ENCODE measurements at regions of chr1 and their contacts with region 1.

Region 1: GRCh38 chr1:224851210-224851847 is 78.1 kb upstream of the DNAH14 start:
- DNase-seq: no peak
- H3K4me3 ChIP-seq: no peak overlapping the region
- H3K27ac ChIP-seq: no peak overlapping the region
- H3K4me1 ChIP-seq: no peaks in the 10 kb centered on the region
- H3K27me3 ChIP-seq: peaks cover 0 to 8% (median 0%) of the 10 kb centered on the region in 7 donors
- CTCF ChIP-seq: peak in 9 of 11 experiments; percentile 26 to 70 (median 53)
- POLR2A ChIP-seq: no peak

Region 2: DNA sequence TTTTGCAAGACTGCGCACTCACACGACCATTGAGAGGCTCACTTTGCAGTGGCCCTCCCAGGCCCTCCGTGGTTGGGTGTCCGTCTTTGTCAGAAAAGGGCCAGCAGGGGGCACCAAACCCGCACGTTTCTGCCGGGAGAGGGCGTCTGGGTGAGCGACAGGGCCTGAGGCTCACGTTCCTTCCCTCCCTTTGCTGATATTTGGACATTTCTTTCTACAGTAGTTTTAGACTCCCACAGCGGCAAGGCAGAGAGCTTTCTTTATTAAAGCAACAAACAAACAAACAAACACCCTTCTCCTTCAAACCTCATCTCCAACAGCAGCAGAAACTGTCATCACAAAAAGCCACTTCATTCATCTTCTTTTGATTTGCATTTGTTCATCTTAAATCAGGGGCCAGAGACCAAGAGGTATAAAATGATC is 337.5 kb before region 1 on chr1:
- intact Hi-C with region 1: loop called (anchors 5 kb)
- DNase-seq: peak; percentile 94
- H3K4me3 ChIP-seq: no peak overlapping the region
- H3K27ac ChIP-seq: no peak overlapping the region
- H3K4me1 ChIP-seq: peaks cover 0 to 7% (median 6%) of the 10 kb centered on the region in 6 donors
- H3K27me3 ChIP-seq: no peaks in the 10 kb centered on the region
- CTCF ChIP-seq: peak; percentile 62 to 93 (median 84)
- POLR2A ChIP-seq: no peak

Region 3: DNA sequence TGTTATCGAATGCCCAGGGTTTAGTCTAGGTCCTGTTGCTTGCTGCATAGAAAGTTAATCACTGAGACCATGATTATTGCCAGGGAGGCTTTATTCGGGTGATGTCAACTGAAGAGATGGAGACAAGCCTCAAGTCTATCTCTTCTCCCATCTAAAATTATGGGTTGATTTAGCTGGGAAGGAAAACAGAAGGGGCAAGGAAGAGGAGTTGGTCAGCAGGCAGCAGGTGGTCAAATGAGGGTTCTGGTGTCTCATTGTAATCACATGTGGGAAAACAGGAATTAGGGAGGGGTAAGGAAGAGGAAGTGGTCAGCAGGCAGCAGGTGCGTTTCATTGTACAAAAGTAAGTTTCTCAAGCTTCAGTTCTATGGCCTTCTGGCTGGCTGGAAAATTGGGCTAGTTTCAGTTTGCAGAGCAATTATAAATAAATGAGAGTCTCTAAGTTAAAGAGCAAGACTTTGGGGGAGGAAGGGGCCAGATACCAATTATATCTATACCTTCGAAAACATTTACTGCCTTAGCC is 68.1 kb before region 1 on chr1:
- intact Hi-C with region 1: no loop called
- DNase-seq: no peak
- H3K4me3 ChIP-seq: no peak overlapping the region
- H3K27ac ChIP-seq: peak overlapping the region in 4 of 8 donors; percentile 11 to 61 (median 40)
- H3K4me1 ChIP-seq: peaks cover 0 to 15% (median 4%) of the 10 kb centered on the region in 6 donors
- H3K27me3 ChIP-seq: no peaks in the 10 kb centered on the region
- CTCF ChIP-seq: no peak
- POLR2A ChIP-seq: no peak